ENCODE measurements at regions of chr6 and their contacts with region 1.

Region 1: DNA sequence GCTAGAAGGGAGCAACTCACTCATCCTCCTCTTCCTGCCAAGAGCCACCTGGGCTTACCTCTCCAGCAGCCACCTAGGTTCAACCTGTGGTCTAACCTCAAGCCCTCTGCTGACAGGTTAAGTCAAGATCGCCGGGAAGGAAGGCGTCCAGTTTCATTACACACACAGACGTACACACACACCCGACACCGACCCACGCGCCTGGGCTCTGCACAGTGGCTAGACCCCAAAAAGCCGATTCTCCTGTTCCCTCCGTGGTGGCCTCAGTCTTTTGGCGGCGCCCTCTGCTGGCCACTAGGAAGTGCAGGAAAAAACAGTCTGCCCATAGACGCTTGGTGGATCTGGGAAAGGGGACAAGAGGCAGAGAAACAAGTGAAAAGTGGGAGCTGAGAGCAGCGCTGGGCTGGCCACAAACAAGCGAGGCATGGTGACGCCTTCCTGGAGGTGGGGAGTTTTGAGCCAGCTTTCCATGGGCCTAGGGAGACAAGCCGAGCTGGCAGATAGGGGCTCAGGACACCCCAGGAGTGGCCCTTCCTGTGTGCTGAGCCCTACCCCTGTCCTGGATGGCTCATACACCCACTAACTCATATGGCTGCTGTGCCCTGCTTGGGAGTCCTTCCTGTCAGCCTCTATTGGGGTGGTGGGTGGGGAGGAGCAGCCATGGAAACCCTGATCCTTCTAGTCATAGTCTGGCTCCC is 52.7 kb downstream of the MRPL14 start:
- DNase-seq: no peak
- ATAC-seq: peak; percentile 72
- H3K4me3 ChIP-seq: peak overlapping the region; percentile 38 to 59
- H3K27ac ChIP-seq: peak overlapping the region; percentile 31; the same call in 1 of the 2 replicates
- H3K4me1 ChIP-seq: peaks cover 16 to 36% of the 10 kb centered on the region in 2 experiments
- H3K27me3 ChIP-seq: no peaks in the 10 kb centered on the region
- CTCF ChIP-seq: peak in 2 of 3 experiments; percentile 87 to 96; a peak in 4 of 6 replicates
- POLR2A ChIP-seq: peak; percentile 7
- RAD21 ChIP-seq: no peak

Region 2: DNA sequence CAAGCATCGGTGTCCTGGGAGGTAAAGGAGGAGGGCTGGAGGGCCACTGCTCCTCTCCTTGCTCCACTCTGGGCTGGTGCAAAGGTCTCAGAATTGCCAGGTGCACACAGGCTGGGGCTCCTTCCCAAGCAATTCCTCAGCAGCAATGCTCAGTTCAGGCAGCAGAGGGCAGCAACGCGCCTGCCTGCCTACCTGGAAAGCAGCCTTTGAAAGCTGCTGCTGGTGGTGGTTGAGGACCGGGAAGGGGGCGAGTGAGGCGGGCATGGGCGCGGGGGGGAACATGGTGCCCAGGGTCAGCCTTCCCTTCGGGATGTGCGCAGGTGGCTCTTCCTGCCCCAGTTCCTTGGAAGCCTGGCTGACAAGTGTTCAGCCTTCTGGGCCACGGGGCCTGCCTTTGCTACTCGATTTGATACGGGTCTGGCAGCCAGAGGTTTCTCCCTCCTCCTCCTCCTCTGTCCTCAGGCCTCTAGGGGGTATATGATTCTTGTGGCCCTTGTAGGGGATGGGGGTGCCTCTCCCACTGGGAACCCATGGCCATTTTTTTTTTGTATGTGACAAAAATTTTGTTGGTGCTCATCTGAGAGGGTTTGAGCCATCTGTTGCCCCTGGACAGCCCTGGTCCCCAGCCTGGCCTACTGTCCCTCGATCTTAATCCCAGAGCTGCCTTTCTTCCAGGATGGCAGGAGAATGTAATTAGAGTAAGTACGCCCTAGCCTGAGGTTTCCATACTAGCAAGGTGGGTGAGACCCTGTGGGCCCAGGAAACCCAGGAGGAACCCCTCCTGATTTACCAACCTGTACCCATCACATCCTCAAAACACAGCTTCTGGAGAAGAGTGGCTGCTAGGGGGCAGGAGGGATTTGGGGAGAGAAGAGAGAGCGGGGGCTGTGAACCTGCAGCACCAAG is 407.1 kb before region 1 on chr6:
- CTCF ChIA-PET with region 1: interaction called, 45 read pairs
- POLR2A ChIA-PET with region 1: interaction called, 3 read pairs
- RAD21 ChIA-PET with region 1: interaction called, 3 to 4 read pairs
- intact Hi-C with region 1: loop called (anchors 1 kb)
- DNase-seq: peak; percentile 43
- ATAC-seq: peak; percentile 68
- H3K4me3 ChIP-seq: no peak overlapping the region; a peak in 1 of 4 replicates
- H3K27ac ChIP-seq: peak overlapping the region; percentile 49; the same call in 1 of the 2 replicates
- H3K4me1 ChIP-seq: peaks cover 12 to 49% of the 10 kb centered on the region in 2 experiments
- H3K27me3 ChIP-seq: no peaks in the 10 kb centered on the region
- CTCF ChIP-seq: peak; percentile 89 to 97 (median 94)
- POLR2A ChIP-seq: no peak
- RAD21 ChIP-seq: peak; percentile 95

Region 3: DNA sequence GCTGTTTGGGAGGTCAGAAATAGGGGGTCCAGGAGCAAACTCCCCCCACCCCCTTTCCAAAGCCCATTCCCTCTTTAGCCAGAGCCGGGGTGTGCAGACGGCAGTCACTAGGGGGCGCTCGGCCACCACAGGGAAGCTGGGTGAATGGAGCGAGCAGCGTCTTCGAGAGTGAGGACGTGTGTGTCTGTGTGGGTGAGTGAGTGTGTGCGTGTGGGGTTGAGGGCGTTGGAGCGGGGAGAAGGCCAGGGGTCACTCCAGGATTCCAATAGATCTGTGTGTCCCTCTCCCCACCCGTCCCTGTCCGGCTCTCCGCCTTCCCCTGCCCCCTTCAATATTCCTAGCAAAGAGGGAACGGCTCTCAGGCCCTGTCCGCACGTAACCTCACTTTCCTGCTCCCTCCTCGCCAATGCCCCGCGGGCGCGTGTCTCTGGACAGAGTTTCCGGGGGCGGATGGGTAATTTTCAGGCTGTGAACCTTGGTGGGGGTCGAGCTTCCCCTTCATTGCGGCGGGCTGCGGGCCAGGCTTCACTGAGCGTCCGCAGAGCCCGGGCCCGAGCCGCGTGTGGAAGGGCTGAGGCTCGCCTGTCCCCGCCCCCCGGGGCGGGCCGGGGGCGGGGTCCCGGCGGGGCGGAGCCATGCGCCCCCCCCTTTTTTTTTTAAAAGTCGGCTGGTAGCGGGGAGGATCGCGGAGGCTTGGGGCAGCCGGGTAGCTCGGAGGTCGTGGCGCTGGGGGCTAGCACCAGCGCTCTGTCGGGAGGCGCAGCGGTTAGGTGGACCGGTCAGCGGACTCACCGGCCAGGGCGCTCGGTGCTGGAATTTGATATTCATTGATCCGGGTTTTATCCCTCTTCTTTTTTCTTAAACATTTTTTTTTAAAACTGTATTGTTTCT is 304.8 kb before region 1 on chr6 and contains the start of gene VEGFA:
- CTCF ChIA-PET with region 1: interaction called, 51 read pairs
- POLR2A ChIA-PET with region 1: interaction called, 17 read pairs
- RAD21 ChIA-PET with region 1: interaction called, 10 to 11 read pairs
- intact Hi-C with region 1: loop called (anchors 1 kb)
- DNase-seq: peak; percentile 68
- ATAC-seq: peak; percentile 63
- H3K4me3 ChIP-seq: peak within 1 kb of the TSS; percentile 93
- H3K27ac ChIP-seq: peak within 1 kb of the TSS; percentile 95
- H3K4me1 ChIP-seq: peaks cover 25 to 37% of the 10 kb centered on the region in 2 experiments
- H3K27me3 ChIP-seq: no peaks in the 10 kb centered on the region
- CTCF ChIP-seq: peak in 2 of 3 experiments; percentile 97; a peak in 4 of 6 replicates
- POLR2A ChIP-seq: peak; percentile 98
- RAD21 ChIP-seq: no peak
- total RNA-seq, gene VEGFA: 112 TPM

Region 4: GRCh38 chr6:43856005-43856765 is 218.4 kb before region 1 on chr6:
- CTCF ChIA-PET with region 1: interaction called, 4 read pairs
- POLR2A ChIA-PET with region 1: interaction called, 3 read pairs
- RAD21 ChIA-PET with region 1: no interaction called
- intact Hi-C with region 1: loop called (anchors 2 kb)
- DNase-seq: peak; percentile 21
- ATAC-seq: peak; percentile 80
- H3K4me3 ChIP-seq: no peak overlapping the region
- H3K27ac ChIP-seq: no peak overlapping the region
- H3K4me1 ChIP-seq: no peaks in the 10 kb centered on the region
- H3K27me3 ChIP-seq: no peaks in the 10 kb centered on the region; the same call in 1 of the 2 replicates
- CTCF ChIP-seq: peak; percentile 56 to 71 (median 70); a peak in 5 of 6 replicates
- POLR2A ChIP-seq: no peak
- RAD21 ChIP-seq: peak; percentile 66

Region 5: DNA sequence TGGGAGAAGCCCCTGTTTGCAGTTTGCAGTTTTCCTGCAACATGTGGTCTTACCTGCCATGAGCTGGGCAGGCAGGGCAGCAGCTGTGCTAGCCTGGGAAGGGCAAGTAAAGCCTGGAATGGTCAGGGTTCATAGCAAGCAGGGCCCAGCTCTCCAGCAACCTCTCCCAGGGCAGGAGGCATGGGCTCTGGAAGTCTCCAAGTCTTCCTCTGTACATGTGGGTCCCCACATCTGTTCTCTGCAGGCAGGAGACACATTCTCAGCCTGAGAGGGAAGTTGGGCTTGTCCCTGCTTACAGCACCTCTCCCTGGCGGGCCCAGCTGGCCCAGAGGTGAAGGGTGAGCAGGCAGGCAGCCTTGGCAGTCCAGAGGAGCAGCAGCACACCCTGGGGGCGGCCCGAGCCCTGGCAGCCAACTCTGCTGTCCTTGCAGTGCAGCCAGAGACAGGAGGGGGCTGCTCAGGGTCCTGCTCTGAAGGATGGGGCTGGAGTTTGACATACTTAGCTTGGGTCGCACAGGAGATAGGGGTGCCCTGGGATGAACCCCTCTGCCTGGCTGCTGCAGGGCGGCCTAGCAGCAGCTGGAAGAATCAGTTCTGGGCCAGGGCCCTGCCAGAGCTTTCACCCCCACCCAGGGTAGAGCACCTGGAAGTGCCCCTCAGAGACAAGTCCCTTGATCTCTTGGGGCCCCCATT is 123.4 kb before region 1 on chr6:
- CTCF ChIA-PET with region 1: interaction called, 7 read pairs
- POLR2A ChIA-PET with region 1: no interaction called
- RAD21 ChIA-PET with region 1: interaction called in 1 of 2 experiments, 3 read pairs
- intact Hi-C with region 1: loop called (anchors 5 kb)
- DNase-seq: peak; percentile 10
- ATAC-seq: peak; percentile 66; the same call in 1 of the 2 replicates
- H3K4me3 ChIP-seq: no peak overlapping the region
- H3K27ac ChIP-seq: no peak overlapping the region
- H3K4me1 ChIP-seq: no peaks in the 10 kb centered on the region
- H3K27me3 ChIP-seq: no peaks in the 10 kb centered on the region
- CTCF ChIP-seq: peak; percentile 41 to 85 (median 43)
- POLR2A ChIP-seq: no peak
- RAD21 ChIP-seq: peak; percentile 87

Region 6: GRCh38 chr6:44064089-44064947 is 10.3 kb before region 1 on chr6:
- CTCF ChIA-PET with region 1: interaction called, 16 read pairs
- POLR2A ChIA-PET with region 1: interaction called, 6 read pairs
- RAD21 ChIA-PET with region 1: interaction called, 3 read pairs
- intact Hi-C with region 1: no loop called
- DNase-seq: no peak
- ATAC-seq: peak; percentile 54
- H3K4me3 ChIP-seq: no peak overlapping the region
- H3K27ac ChIP-seq: no peak overlapping the region
- H3K4me1 ChIP-seq: peaks cover 0 to 38% of the 10 kb centered on the region in 2 experiments; a peak in 2 of 4 replicates
- H3K27me3 ChIP-seq: no peaks in the 10 kb centered on the region
- CTCF ChIP-seq: no peak
- POLR2A ChIP-seq: no peak
- RAD21 ChIP-seq: no peak